ENCODE measurements at regions of chr19 and their contacts with region 1.

Region 1: DNA sequence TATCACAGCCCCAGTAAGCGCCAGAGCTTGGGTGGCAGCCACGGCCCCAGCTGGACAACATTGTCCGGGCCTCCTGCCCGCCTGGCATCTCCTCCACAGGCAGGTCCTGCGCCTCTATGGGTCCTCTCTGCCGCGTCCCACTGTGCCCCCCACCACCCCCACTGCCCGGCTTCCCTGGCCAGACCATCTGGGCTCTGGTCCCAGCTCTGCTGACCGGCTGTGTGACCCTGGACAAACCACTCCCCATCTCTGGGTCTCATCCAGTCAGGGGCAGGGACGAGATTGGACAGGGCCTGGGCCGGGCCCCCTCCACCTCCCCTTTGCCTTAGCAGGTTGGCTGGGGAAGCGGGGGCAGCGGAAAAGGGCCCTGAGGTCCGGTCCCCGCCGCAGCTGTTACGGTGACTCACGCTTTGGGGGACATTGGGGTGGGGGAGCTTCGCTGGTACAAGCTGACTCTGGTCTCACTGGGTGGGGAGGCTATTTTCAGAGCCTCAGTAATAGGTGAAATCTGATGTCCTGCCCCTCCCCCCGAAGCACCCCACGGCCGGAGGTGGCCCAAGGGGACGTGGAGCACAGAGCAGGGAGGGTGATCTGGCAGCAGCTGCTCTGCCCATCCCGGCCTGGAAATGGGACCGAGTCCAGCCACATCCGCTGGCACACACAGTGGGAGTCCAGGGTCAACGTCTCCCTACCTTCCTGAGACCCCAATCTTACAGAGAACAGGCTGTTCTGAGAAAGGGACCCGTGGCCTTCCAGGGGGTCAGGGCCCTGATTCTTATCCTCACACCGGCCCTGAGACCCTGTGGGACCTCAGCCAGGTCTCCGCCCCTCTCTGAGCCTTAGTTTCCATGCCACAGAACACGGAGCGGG is 9.1 kb downstream of the NFIC start:
- DNase-seq: no peak
- CTCF ChIP-seq: no peak

Region 2: GRCh38 chr19:3440082-3440481 is 64.6 kb after region 1 on chr19:
- CTCF ChIA-PET with region 1: no interaction called
- POLR2A ChIA-PET with region 1: interaction called, 10 read pairs
- DNase-seq: peak; percentile 75
- CTCF ChIP-seq: peak; percentile 42

Region 3: DNA sequence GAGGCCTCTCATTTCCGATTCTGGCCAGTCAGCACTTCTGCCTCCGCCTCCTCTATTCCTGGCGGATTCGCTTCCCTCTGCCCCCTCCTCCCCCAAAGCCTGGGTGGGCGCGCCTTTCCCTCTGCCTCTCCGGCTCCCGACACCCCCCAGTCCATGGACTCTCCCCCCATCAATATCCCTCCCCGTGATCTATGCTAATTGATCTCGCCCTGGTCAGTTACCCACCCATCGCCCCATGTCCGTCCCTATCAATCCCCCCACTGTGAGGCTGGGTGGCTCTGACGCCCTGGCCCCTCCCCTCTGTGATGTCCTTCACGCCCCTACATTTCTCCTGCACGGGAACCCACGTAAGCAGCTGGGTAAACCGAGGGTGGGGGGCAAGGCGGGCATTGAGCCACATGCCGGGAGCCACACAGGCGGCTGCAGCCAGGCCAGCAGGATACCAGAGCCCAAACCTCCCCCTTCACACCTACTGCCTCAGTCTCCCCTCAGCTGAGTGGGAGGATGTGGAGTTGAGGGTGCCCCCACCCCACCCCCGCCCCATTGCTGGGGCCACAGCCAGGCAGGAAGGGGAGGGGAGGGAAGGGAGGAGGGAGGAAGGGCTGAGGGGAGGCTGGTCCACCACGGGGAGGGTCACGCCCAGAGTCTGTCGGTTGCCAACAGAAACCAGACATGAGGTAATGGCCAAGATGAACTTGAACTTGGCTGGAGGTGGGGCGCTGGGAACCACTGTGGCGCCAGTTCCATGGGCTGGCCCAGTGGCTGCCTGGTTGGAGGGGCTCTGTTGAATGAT is 83.8 kb after region 1 on chr19:
- CTCF ChIA-PET with region 1: no interaction called
- POLR2A ChIA-PET with region 1: no interaction called
- DNase-seq: no peak
- CTCF ChIP-seq: no peak